Activated CD4-positive, alpha-beta T cell treated with anti-CD3 and anti-CD28 coated beads for 36 hours (primary cell): ENCODE measurements at regions of chr6 and their contacts with region 1.

Region 1: GRCh38 chr6:42166444-42167141 is 6.6 kb upstream of the GUCA1A start:
- DNase-seq: peak; percentile 89
- ATAC-seq: peak; percentile 97
- H3K4me3 Mint-ChIP-seq: no peak overlapping the region
- H3K27ac Mint-ChIP-seq: no peak overlapping the region
- H3K4me1 Mint-ChIP-seq: peaks cover 2% of the 10 kb centered on the region
- H3K27me3 Mint-ChIP-seq: peaks cover 2% of the 10 kb centered on the region

Region 2: DNA sequence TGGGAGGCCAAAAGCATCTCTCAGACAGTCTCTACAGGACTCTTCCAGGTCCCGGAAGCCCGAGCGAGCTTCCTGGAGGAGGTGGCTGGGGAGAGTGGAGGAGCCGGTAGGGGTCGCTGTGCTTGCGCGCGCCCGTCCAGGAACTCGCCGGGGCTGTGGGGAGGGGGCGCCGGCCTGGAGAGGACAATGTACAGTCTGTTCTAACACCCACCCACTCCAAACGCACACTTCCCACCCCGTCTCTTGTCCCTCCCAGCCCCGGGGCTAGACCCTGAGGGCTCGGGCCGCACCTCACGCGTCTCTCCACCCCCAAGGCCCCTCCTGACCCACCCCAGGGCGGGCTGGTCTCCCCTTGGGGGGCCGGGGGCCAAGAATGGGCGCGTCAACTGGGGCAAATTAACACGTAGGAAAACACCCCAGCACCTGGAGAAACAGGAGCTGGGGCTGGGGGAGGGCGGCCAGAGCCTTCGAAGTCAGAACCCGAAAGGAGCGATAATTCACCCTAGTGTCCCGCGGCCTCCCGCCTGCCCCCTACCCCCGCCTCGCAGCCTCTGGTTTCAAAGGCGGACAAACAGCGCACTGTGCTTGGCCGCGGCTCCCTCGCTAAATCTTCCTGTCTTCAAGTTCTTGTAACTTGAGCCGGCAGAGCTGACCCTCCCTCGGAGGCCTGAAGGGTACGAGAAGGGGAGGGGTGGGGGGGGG is 723.6 kb before region 1 on chr6:
- CTCF ChIA-PET with region 1: no interaction called
- POLR2A ChIA-PET with region 1: no interaction called
- intact Hi-C with region 1: no loop called
- DNase-seq: peak; percentile 52
- ATAC-seq: no peak
- H3K4me3 Mint-ChIP-seq: no peak overlapping the region
- H3K27ac Mint-ChIP-seq: no peak overlapping the region
- H3K4me1 Mint-ChIP-seq: peaks cover 30% of the 10 kb centered on the region
- H3K27me3 Mint-ChIP-seq: peaks cover 8% of the 10 kb centered on the region

Region 3: GRCh38 chr6:41602864-41603608 is 563.6 kb before region 1 on chr6:
- CTCF ChIA-PET with region 1: no interaction called
- POLR2A ChIA-PET with region 1: no interaction called
- intact Hi-C with region 1: loop called in 1 of 2 experiments (anchors 2 kb)
- DNase-seq: peak; percentile 86
- ATAC-seq: peak; percentile 93
- H3K4me3 Mint-ChIP-seq: no peak overlapping the region
- H3K27ac Mint-ChIP-seq: no peak overlapping the region
- H3K4me1 Mint-ChIP-seq: peaks cover 3% of the 10 kb centered on the region
- H3K27me3 Mint-ChIP-seq: no peaks in the 10 kb centered on the region

Region 4: GRCh38 chr6:41846666-41847237 is 319.8 kb before region 1 on chr6:
- CTCF ChIA-PET with region 1: interaction called, 3 read pairs
- POLR2A ChIA-PET with region 1: no interaction called
- intact Hi-C with region 1: loop called in 1 of 2 experiments (anchors 2 kb)
- DNase-seq: peak; percentile 67
- ATAC-seq: peak; percentile 85
- H3K4me3 Mint-ChIP-seq: no peak overlapping the region
- H3K27ac Mint-ChIP-seq: no peak overlapping the region
- H3K4me1 Mint-ChIP-seq: peaks cover 5% of the 10 kb centered on the region
- H3K27me3 Mint-ChIP-seq: no peaks in the 10 kb centered on the region

Region 5: GRCh38 chr6:41901882-41902519 is 264.6 kb before region 1 on chr6:
- CTCF ChIA-PET with region 1: no interaction called
- POLR2A ChIA-PET with region 1: no interaction called
- intact Hi-C with region 1: loop called in 1 of 2 experiments (anchors 1 kb)
- DNase-seq: peak; percentile 75
- ATAC-seq: peak; percentile 78
- H3K4me3 Mint-ChIP-seq: no peak overlapping the region
- H3K27ac Mint-ChIP-seq: no peak overlapping the region
- H3K4me1 Mint-ChIP-seq: peaks cover 6% of the 10 kb centered on the region
- H3K27me3 Mint-ChIP-seq: no peaks in the 10 kb centered on the region

Region 6: GRCh38 chr6:42075159-42075838 is 91.3 kb before region 1 on chr6:
- CTCF ChIA-PET with region 1: interaction called, 6 read pairs
- POLR2A ChIA-PET with region 1: interaction called, 4 read pairs
- intact Hi-C with region 1: loop called (anchors 1 kb)
- DNase-seq: peak; percentile 82
- ATAC-seq: peak; percentile 63
- H3K4me3 Mint-ChIP-seq: no peak overlapping the region
- H3K27ac Mint-ChIP-seq: no peak overlapping the region
- H3K4me1 Mint-ChIP-seq: peaks cover 3% of the 10 kb centered on the region
- H3K27me3 Mint-ChIP-seq: no peaks in the 10 kb centered on the region

Region 7: GRCh38 chr6:42104095-42104806 is 62.3 kb before region 1 on chr6:
- CTCF ChIA-PET with region 1: interaction called, 7 read pairs
- POLR2A ChIA-PET with region 1: no interaction called
- intact Hi-C with region 1: loop called (anchors 1 to 5 kb)
- DNase-seq: peak; percentile 88
- ATAC-seq: peak; percentile 66
- H3K4me3 Mint-ChIP-seq: peak overlapping the region; percentile 61
- H3K27ac Mint-ChIP-seq: peak overlapping the region; percentile 64
- H3K4me1 Mint-ChIP-seq: peaks cover 27% of the 10 kb centered on the region
- H3K27me3 Mint-ChIP-seq: peaks cover 2% of the 10 kb centered on the region

Region 8: DNA sequence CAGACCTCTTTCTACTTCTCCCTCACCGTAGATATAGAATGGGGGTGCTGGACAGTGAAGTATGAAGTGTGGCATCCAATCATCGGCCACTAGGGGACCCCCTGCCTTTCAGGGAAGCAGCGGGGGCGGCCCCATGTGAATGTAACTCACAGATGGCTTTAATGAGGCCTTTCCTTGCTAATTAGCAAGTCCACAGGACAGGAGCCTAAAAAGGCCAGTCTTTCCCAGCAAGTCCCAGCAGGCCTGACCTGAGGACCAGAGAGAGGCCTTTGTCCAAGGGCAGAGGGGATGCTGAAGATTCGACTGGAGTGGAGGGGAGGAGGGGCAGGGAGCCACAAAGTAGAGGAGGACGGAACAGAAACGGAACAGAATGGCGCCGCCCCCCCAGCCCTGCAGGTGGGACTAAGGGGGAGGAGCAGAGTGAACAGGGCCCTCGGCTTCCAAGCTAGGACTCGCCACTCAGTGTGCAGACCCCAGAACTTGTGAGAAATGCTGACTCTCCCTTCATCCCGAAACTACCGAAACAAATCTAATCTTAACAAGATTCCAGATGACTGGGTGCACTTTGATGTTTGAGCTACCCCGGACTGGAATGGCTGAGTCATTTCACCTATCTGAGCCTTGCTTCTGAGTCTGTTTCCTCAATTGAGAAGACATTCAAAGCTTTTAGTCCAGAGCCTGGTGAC is 29.9 kb before region 1 on chr6:
- CTCF ChIA-PET with region 1: interaction called, 4 read pairs
- POLR2A ChIA-PET with region 1: no interaction called
- intact Hi-C with region 1: loop called in 1 of 2 experiments (anchors 2 kb)
- DNase-seq: peak; percentile 61
- ATAC-seq: peak; percentile 84
- H3K4me3 Mint-ChIP-seq: no peak overlapping the region
- H3K27ac Mint-ChIP-seq: no peak overlapping the region
- H3K4me1 Mint-ChIP-seq: peaks cover 12% of the 10 kb centered on the region
- H3K27me3 Mint-ChIP-seq: peaks cover 20% of the 10 kb centered on the region